OCI-LY7 (cell line): ENCODE measurements at regions of chr2 and their contacts with region 1.

Region 1: GRCh38 chr2:43491065-43491639 is 104.7 kb downstream of the THADA start:
- DNase-seq: no peak
- H3K4me3 ChIP-seq: no peak overlapping the region
- H3K27ac ChIP-seq: no peak overlapping the region
- H3K4me1 ChIP-seq: no peaks in the 10 kb centered on the region
- CTCF ChIP-seq: no peak

Region 2: GRCh38 chr2:42639340-42640077 is 851.6 kb before region 1 on chr2:
- CTCF ChIA-PET with region 1: no interaction called
- POLR2A ChIA-PET with region 1: no interaction called
- intact Hi-C with region 1: no loop called
- DNase-seq: no peak
- H3K4me3 ChIP-seq: no peak overlapping the region
- H3K27ac ChIP-seq: peak overlapping the region; percentile 23
- H3K4me1 ChIP-seq: peaks cover 26% of the 10 kb centered on the region
- CTCF ChIP-seq: no peak

Region 3: GRCh38 chr2:43542285-43542937 is 51.3 kb after region 1 on chr2:
- CTCF ChIA-PET with region 1: no interaction called
- POLR2A ChIA-PET with region 1: no interaction called
- intact Hi-C with region 1: loop called (anchors 5 kb)
- DNase-seq: peak; percentile 62
- H3K4me3 ChIP-seq: no peak overlapping the region
- H3K27ac ChIP-seq: no peak overlapping the region
- H3K4me1 ChIP-seq: no peaks in the 10 kb centered on the region
- CTCF ChIP-seq: peak; percentile 90